Panc1 (cell line): ENCODE measurements at regions of chr15 and their contacts with region 1.

Region 1: GRCh38 chr15:56052395-56053045 is 59.1 kb upstream of the NEDD4 start:
- DNase-seq: peak; percentile 43
- ATAC-seq: peak; percentile 80
- H3K4me3 ChIP-seq: no peak overlapping the region
- H3K27ac ChIP-seq: no peak overlapping the region
- H3K4me1 ChIP-seq: no peaks in the 10 kb centered on the region
- H3K27me3 ChIP-seq: no peaks in the 10 kb centered on the region
- CTCF ChIP-seq: peak; percentile 79; the same call in 1 of the 2 replicates

Region 2: GRCh38 chr15:55993111-55993803 is 59.3 kb before region 1 on chr15 and contains the start of gene NEDD4:
- CTCF ChIA-PET with region 1: no interaction called
- POLR2A ChIA-PET with region 1: no interaction called
- in situ Hi-C with region 1: no loop called
- intact Hi-C with region 1: loop called (anchors 5 kb)
- DNase-seq: no peak
- ATAC-seq: peak; percentile 98
- H3K4me3 ChIP-seq: peak within 1 kb of the TSS; percentile 65 to 90
- H3K27ac ChIP-seq: peak within 1 kb of the TSS; percentile 89
- H3K4me1 ChIP-seq: peaks cover 19% of the 10 kb centered on the region
- H3K27me3 ChIP-seq: no peaks in the 10 kb centered on the region
- CTCF ChIP-seq: peak; percentile 86
- total RNA-seq, gene NEDD4: 18.8 TPM